BJ (cell line): ENCODE measurements at regions of chr4 and their contacts with region 1.

Region 1: DNA sequence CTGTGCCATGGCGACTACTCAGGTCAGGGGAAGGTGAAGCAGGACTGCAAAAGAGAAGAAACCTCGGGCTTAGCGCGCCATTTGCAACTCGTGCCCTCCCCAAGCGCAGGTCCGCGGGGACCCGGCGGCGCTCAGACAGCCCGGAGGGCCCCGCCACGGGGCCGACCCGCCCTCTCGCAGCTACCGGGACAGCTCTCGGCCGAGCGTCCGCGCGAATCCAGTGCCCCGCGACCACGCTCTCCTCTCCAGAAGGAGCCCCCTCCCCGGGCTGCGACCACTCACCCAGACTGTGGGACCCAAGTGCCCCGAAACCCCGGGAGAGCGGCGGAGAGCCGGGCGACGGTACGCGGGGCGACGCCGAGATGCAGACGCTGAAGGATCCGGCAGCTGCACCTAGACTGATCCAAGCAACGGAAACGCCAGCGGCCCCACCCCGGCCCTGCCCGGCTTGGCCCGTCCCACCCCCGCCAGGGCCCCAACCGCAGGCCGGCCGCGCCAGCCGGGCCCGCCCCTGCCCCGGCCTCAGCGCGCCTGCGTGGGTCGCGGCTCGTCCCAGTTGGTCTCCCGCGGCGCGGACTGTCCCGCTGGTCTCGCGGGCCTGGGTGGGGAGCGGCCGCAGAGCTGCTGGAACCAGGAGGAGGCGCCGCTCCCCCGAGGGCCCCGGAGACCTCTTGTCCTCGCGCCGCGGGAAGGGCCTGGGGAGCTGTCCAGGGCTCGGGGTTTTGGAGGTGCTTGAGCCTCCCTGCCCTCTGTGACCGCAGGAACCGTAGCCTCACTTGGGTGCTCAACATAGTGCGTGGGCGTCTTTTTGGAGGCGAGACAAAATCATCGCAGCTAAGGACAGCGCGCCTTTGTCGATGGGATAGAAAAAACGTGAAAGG is at the start of gene ANXA5:
- DNase-seq: no peak
- H3K4me3 ChIP-seq: peak within 1 kb of the TSS; percentile 97
- H3K27me3 ChIP-seq: no peaks in the 10 kb centered on the region
- CTCF ChIP-seq: peak; percentile 64
- polyA plus RNA-seq, gene ANXA5: 591 and 1,019 TPM in 2 replicates

Region 2: GRCh38 chr4:121421594-121421993 is 275.2 kb before region 1 on chr4:
- CTCF ChIA-PET with region 1: no interaction called
- POLR2A ChIA-PET with region 1: interaction called, 12 read pairs
- DNase-seq: no peak
- H3K4me3 ChIP-seq: no peak overlapping the region
- H3K27me3 ChIP-seq: no peaks in the 10 kb centered on the region
- CTCF ChIP-seq: peak; percentile 23; the same call in 1 of the 2 replicates

Region 3: DNA sequence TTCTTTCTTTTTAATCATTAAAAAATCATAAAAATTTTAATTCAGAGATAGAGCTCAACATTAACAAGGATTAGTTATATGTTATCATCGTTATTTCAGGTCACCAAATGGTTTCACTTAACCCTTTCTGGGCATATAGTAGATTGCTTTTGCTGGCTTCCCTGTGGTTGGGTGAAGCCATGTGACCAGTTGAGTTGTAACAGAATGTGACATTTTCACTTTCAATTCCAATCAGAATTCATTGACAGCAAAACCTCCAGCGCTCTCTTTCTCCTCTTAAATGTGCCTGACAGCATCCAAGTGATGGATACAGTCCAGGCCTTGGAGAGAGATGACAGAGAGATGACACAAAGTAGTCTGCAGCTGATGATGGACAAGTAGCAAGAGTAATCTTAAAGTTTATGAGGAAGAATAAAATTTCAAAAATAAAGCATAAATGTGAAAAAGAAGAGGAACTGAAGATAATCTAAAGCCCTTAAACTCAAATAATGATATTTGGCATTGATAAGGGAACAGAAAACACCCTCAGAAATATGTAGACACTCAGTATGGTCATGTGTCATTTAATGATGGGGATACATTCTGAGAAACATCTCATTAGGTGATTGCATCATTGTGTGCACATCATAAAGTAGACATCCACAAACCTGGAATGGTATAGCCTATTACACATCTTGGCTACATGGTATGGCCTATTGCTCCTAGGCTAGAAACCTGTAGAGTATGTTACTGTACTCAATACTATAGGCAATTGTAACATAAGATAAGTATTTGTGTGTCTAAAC is 223.7 kb before region 1 on chr4:
- CTCF ChIA-PET with region 1: no interaction called
- POLR2A ChIA-PET with region 1: no interaction called
- DNase-seq: no peak
- H3K4me3 ChIP-seq: no peak overlapping the region
- H3K27me3 ChIP-seq: no peaks in the 10 kb centered on the region
- CTCF ChIP-seq: no peak

Region 4: GRCh38 chr4:121711263-121712000 is 14.6 kb after region 1 on chr4:
- CTCF ChIA-PET with region 1: interaction called, 13 read pairs
- POLR2A ChIA-PET with region 1: interaction called, 10 read pairs
- DNase-seq: peak; percentile 84
- H3K4me3 ChIP-seq: peak overlapping the region; percentile 27; the same call in 1 of the 2 replicates
- H3K27me3 ChIP-seq: no peaks in the 10 kb centered on the region
- CTCF ChIP-seq: no peak

Region 5: DNA sequence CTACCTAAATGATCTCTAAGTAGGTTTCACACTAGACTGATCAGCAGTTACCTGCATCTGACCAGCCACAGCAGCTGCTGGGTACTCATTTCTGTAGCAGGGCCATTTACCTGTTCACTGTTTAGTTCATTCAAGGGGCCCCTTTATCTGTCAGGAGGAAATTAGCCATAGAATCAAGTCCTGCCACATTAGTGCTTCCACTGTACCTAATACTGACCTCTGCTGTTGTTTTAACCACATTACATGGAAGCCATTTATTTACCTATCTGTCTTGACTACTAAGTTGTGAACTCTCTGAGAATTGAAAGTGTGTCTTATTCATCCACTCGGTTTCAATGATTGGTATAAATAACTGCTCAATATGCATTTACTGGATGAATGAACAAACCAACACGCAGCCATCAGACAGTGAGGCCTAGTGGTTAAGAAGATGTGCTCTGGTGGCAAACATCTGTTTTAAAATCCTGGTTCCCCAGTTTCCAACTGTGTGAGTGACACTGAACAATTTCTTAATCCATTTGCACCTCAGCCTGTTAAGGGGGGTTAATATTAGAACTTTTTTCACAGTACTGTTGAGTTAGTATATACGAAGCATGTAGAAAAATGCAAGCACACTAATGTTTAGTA is 29.9 kb after region 1 on chr4:
- CTCF ChIA-PET with region 1: interaction called, 12 read pairs
- POLR2A ChIA-PET with region 1: interaction called, 3 read pairs
- DNase-seq: no peak
- H3K4me3 ChIP-seq: no peak overlapping the region
- H3K27me3 ChIP-seq: no peaks in the 10 kb centered on the region
- CTCF ChIP-seq: peak; percentile 69